CD14-positive monocyte (primary cell): ENCODE measurements at regions of chr6 and their contacts with region 1.

Region 1: GRCh38 chr6:43723737-43724295 is 36.2 kb upstream of the MRPS18A start:
- DNase-seq: peak; percentile 78 to 89 (median 89)
- H3K4me3 ChIP-seq: peak overlapping the region in 1 of 3 experiments; percentile 53
- H3K4me3 Mint-ChIP-seq: peak overlapping the region; percentile 11 to 43
- H3K27ac ChIP-seq: peak overlapping the region in 1 of 2 donors; percentile 85
- H3K27ac Mint-ChIP-seq: peak overlapping the region; percentile 90 to 99 (median 98)
- H3K4me1 ChIP-seq: peaks cover 37 to 40% of the 10 kb centered on the region in 2 donors
- H3K4me1 Mint-ChIP-seq: peaks cover 50% of the 10 kb centered on the region
- H3K27me3 ChIP-seq: peaks cover 9 to 37% of the 10 kb centered on the region in 2 donors
- H3K27me3 Mint-ChIP-seq: peaks cover 26 to 46% (median 32%) of the 10 kb centered on the region in 3 donors
- CTCF ChIP-seq: peak; percentile 87

Region 2: DNA sequence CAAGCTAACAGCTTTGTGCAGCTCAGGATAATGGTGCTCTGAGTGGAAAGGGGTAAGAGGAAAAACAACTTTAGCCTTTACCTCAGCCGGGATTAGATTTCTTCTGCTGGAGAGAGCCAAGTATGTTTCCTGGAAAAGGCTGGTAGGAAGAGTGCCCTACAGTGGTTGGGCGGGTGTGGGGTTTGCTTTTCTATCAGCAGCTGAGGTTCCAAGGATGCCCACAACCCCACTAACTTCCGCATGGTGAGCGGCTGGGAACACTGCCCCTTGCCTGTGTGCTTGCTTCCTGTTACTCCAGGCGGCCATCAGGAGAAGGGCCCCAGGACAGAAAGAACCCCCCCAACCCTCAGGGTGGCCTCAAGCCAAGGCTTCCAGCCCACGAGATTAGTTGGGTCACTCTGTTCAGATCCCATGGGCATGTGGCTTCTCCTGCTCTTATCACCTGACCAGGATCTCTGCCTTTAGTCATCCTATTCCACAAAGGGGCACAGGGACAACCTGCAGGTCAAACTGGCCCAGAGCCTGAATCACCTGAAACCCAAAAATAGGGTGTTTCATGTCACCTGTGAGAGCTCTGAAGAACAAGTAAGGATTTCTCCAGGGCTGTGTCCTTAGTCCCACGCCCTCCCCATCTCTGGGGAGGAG is 46.7 kb before region 1 on chr6:
- intact Hi-C with region 1: no loop called
- DNase-seq: no peak
- H3K4me3 ChIP-seq: no peak overlapping the region
- H3K4me3 Mint-ChIP-seq: no peak overlapping the region
- H3K27ac ChIP-seq: no peak overlapping the region
- H3K27ac Mint-ChIP-seq: no peak overlapping the region
- H3K4me1 ChIP-seq: no peaks in the 10 kb centered on the region
- H3K4me1 Mint-ChIP-seq: no peaks in the 10 kb centered on the region
- H3K27me3 ChIP-seq: no peaks in the 10 kb centered on the region
- H3K27me3 Mint-ChIP-seq: peaks cover 0 to 2% (median 0%) of the 10 kb centered on the region in 3 donors
- CTCF ChIP-seq: no peak

Region 3: GRCh38 chr6:43687437-43688347 is 36.1 kb before region 1 on chr6 and contains the start of gene MRPS18A:
- intact Hi-C with region 1: loop called in 1 of 2 experiments (anchors 5 kb)
- DNase-seq: peak; percentile 70 to 85 (median 73)
- H3K4me3 ChIP-seq: peak within 1 kb of the TSS; percentile 80 to 98 (median 93)
- H3K4me3 Mint-ChIP-seq: peak within 1 kb of the TSS; percentile 92 to 97
- H3K27ac ChIP-seq: peak within 1 kb of the TSS; percentile 66 to 95
- H3K27ac Mint-ChIP-seq: peak within 1 kb of the TSS; percentile 90 to 97 (median 95)
- H3K4me1 ChIP-seq: peaks cover 24 to 30% of the 10 kb centered on the region in 2 donors
- H3K4me1 Mint-ChIP-seq: peaks cover 33% of the 10 kb centered on the region
- H3K27me3 ChIP-seq: peaks cover 2 to 7% of the 10 kb centered on the region in 2 donors
- H3K27me3 Mint-ChIP-seq: peaks cover 6 to 14% (median 11%) of the 10 kb centered on the region in 3 donors
- CTCF ChIP-seq: no peak
- polyA plus RNA-seq, gene MRPS18A: 17.3 to 45.3 (median 41.4) TPM

Region 4: DNA sequence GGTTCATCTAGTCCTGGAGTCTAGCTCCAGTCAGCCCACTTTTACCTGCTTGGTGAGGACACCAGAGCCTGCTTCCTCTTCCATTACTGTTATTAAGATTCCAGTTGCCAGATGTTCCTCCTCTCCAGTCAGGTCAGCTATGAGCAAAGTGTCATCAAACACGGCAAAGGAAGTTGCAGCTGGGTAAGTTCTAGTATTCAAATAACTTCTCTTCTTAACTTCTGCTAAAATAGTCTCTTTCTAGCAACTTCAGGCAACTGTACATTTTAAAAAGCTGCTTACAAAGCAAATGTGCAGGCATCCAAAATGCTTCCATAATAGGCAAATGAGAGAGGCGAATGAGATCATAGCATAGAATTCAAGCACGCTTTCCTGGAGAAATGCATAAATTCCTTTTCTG is 17.8 kb before region 1 on chr6:
- intact Hi-C with region 1: loop called in 1 of 2 experiments (anchors 2 kb)
- DNase-seq: peak; percentile 56 to 75 (median 67)
- H3K4me3 ChIP-seq: peak overlapping the region in 1 of 3 experiments; percentile 19
- H3K4me3 Mint-ChIP-seq: peak overlapping the region in 1 of 2 donors; percentile 77
- H3K27ac ChIP-seq: no peak overlapping the region
- H3K27ac Mint-ChIP-seq: peak overlapping the region; percentile 64 to 89 (median 79)
- H3K4me1 ChIP-seq: peaks cover 55 to 83% of the 10 kb centered on the region in 2 donors
- H3K4me1 Mint-ChIP-seq: peaks cover 73% of the 10 kb centered on the region
- H3K27me3 ChIP-seq: peaks cover 0 to 6% of the 10 kb centered on the region in 2 donors
- H3K27me3 Mint-ChIP-seq: peaks cover under 1 to 15% (median 12%) of the 10 kb centered on the region in 3 donors
- CTCF ChIP-seq: no peak

Region 5: GRCh38 chr6:43809417-43810291 is 85.8 kb after region 1 on chr6:
- intact Hi-C with region 1: loop called in 1 of 2 experiments (anchors 5 kb)
- DNase-seq: no peak
- H3K4me3 ChIP-seq: no peak overlapping the region
- H3K4me3 Mint-ChIP-seq: no peak overlapping the region
- H3K27ac ChIP-seq: no peak overlapping the region
- H3K27ac Mint-ChIP-seq: no peak overlapping the region
- H3K4me1 ChIP-seq: peaks cover 21 to 22% of the 10 kb centered on the region in 2 donors
- H3K4me1 Mint-ChIP-seq: peaks cover 27% of the 10 kb centered on the region
- H3K27me3 ChIP-seq: no peaks in the 10 kb centered on the region
- H3K27me3 Mint-ChIP-seq: peaks cover 0 to 3% (median 0%) of the 10 kb centered on the region in 3 donors
- CTCF ChIP-seq: no peak

Region 6: GRCh38 chr6:44002593-44003344 is 279.0 kb after region 1 on chr6:
- intact Hi-C with region 1: loop called in 1 of 2 experiments (anchors 5 kb)
- DNase-seq: peak; percentile 54 to 83 (median 58)
- H3K4me3 ChIP-seq: peak overlapping the region in 2 of 3 experiments; percentile 24 to 55
- H3K4me3 Mint-ChIP-seq: peak overlapping the region; percentile 65 to 84
- H3K27ac ChIP-seq: no peak overlapping the region
- H3K27ac Mint-ChIP-seq: peak overlapping the region in 5 of 7 donors; percentile 6 to 78 (median 50)
- H3K4me1 ChIP-seq: peaks cover 20 to 35% of the 10 kb centered on the region in 2 donors
- H3K4me1 Mint-ChIP-seq: peaks cover 33% of the 10 kb centered on the region
- H3K27me3 ChIP-seq: peaks cover 34 to 68% of the 10 kb centered on the region in 2 donors
- H3K27me3 Mint-ChIP-seq: peaks cover 67 to 82% (median 80%) of the 10 kb centered on the region in 3 donors
- CTCF ChIP-seq: no peak